CD4-positive, alpha-beta T cell (primary cell): ENCODE measurements at regions of chr4 and their contacts with region 1.

Region 1: GRCh38 chr4:77433418-77433733 is 172.2 kb upstream of the CXCL13 start:
- DNase-seq: peak in 3 of 14 experiments; percentile 51 to 58 (median 55)
- ATAC-seq: peak; percentile 61
- H3K4me3 ChIP-seq: no peak overlapping the region
- H3K4me3 Mint-ChIP-seq: no peak overlapping the region
- H3K27ac ChIP-seq: no peak overlapping the region
- H3K27ac Mint-ChIP-seq: no peak overlapping the region
- H3K4me1 ChIP-seq: peaks cover 2% of the 10 kb centered on the region
- H3K4me1 Mint-ChIP-seq: peaks cover 10% of the 10 kb centered on the region
- H3K27me3 ChIP-seq: no peaks in the 10 kb centered on the region
- H3K27me3 Mint-ChIP-seq: no peaks in the 10 kb centered on the region
- CTCF ChIP-seq: peak; percentile 49

Region 2: DNA sequence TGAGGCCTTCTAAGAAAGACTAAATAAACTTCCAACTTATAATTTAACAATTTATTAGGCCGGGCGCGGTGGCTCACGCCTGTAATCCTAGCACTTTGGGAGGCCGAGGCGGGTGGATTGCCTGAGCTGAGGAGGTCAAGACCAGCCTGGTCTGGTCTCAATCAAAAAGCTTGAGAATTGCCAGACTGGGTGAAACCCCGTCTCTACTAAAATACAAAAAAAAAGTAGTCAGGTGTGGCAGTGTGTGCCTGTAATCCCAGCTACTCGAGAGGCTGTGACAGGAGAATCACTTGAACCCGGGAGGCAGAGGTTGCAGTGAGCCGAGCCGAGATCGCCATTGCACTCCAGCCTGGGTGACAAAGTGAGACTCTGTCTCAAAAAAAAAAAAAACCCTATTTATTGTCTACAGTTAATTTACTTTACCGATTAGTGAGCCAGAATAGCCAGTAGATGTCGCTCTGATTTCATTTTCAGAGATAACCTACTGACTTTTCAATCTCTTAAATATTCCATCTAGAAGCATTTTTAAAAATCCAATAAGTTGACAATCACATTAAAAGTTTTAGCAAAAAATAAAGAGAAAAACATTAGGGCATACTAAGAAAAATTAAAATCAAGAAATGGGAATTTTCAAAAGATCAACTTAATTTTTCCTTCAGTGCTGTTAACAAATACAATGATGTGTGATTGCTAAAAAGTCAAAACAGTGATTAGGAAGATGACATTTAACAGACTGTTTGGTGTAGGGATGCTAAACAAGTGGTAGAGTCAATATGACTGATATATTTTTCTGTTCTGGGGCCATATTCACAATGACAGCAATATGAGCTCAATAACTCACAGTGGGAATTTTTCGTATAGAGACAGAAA is 1002.6 kb before region 1 on chr4:
- CTCF ChIA-PET with region 1: no interaction called
- POLR2A ChIA-PET with region 1: no interaction called
- intact Hi-C with region 1: loop called (anchors 2 to 10 kb)
- DNase-seq: peak in 4 of 14 experiments; percentile 3 to 57 (median 40)
- ATAC-seq: no peak
- H3K4me3 ChIP-seq: no peak overlapping the region
- H3K4me3 Mint-ChIP-seq: no peak overlapping the region
- H3K27ac ChIP-seq: no peak overlapping the region
- H3K27ac Mint-ChIP-seq: no peak overlapping the region
- H3K4me1 ChIP-seq: peaks cover 3% of the 10 kb centered on the region
- H3K4me1 Mint-ChIP-seq: no peaks in the 10 kb centered on the region
- H3K27me3 ChIP-seq: peaks cover 2 to 8% of the 10 kb centered on the region in 2 experiments
- H3K27me3 Mint-ChIP-seq: peaks cover 16% of the 10 kb centered on the region
- CTCF ChIP-seq: peak; percentile 79

Region 3: GRCh38 chr4:77240469-77241066 is 192.8 kb before region 1 on chr4:
- CTCF ChIA-PET with region 1: no interaction called
- POLR2A ChIA-PET with region 1: no interaction called
- intact Hi-C with region 1: loop called (anchors 2 kb)
- DNase-seq: peak; percentile 18 to 59 (median 38)
- ATAC-seq: peak; percentile 59
- H3K4me3 ChIP-seq: no peak overlapping the region
- H3K4me3 Mint-ChIP-seq: no peak overlapping the region
- H3K27ac ChIP-seq: no peak overlapping the region
- H3K27ac Mint-ChIP-seq: no peak overlapping the region
- H3K4me1 ChIP-seq: no peaks in the 10 kb centered on the region
- H3K4me1 Mint-ChIP-seq: no peaks in the 10 kb centered on the region
- H3K27me3 ChIP-seq: no peaks in the 10 kb centered on the region
- H3K27me3 Mint-ChIP-seq: peaks cover 6% of the 10 kb centered on the region
- CTCF ChIP-seq: peak; percentile 76

Region 4: DNA sequence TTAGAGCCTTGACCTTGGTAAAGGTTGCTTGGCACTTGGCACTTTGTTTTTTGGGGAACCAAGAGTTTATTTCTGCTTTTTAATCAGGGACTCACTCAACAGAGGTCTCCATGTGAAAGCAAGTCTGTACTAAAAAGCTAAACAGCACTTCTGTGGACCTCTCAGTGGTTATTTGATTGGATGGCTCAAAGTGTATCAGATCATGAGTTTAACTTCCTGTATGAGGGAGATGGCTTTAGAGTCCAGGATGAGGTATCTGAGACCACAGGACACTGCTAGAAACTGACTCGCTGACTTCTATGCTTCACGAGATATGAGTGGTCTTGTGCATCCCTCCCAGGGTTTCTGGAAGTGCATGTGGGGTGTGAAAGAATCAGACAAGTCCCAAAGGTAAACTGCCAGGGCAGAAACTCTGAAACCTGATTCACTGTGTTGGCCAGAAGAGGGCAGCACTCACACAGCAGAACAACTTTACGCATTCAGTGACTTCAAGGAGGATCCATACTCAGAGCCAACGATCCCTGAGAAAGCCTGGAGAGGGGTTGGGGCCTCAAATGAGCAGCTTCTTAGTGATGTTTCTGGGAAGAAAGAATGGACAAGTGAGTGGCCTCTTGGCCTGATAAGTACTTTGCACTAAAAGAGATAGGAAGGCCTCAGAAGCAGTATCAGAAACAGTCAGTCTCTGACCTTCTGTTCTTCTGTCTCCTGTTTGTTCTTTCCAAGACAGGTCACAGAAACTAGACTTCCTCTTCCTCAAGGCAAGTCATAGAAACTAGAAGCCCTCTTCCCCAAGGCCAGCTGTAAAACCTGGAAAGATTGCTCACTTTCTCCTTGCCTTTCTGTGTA is 48.0 kb before region 1 on chr4:
- CTCF ChIA-PET with region 1: no interaction called
- POLR2A ChIA-PET with region 1: no interaction called
- intact Hi-C with region 1: loop called (anchors 1 to 5 kb)
- DNase-seq: peak; percentile 16 to 64 (median 30)
- ATAC-seq: no peak
- H3K4me3 ChIP-seq: no peak overlapping the region
- H3K4me3 Mint-ChIP-seq: no peak overlapping the region
- H3K27ac ChIP-seq: no peak overlapping the region
- H3K27ac Mint-ChIP-seq: no peak overlapping the region
- H3K4me1 ChIP-seq: no peaks in the 10 kb centered on the region
- H3K4me1 Mint-ChIP-seq: no peaks in the 10 kb centered on the region
- H3K27me3 ChIP-seq: no peaks in the 10 kb centered on the region
- H3K27me3 Mint-ChIP-seq: peaks cover 4% of the 10 kb centered on the region
- CTCF ChIP-seq: peak; percentile 71

Region 5: DNA sequence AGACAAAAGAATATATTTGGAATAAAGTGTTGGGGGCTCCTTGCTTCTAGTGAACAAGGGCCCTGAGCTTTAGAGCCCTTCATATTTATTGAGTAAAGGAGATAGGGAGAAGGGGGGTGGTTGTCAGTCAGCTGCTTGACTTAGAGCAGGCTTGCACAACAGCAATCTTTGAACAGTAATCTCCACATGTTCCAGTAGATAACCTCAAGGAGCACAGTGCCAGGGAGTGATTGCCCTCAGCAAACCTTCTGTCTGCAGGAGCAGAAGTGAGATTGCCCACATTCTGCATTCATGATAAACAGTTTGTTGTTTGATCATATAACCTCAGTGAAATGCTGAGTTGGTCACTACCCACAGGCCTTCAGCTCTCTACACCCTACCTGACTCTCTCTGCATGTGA is 33.5 kb before region 1 on chr4:
- CTCF ChIA-PET with region 1: no interaction called
- POLR2A ChIA-PET with region 1: no interaction called
- intact Hi-C with region 1: no loop called
- DNase-seq: no peak
- ATAC-seq: no peak
- H3K4me3 ChIP-seq: no peak overlapping the region
- H3K4me3 Mint-ChIP-seq: no peak overlapping the region
- H3K27ac ChIP-seq: no peak overlapping the region
- H3K27ac Mint-ChIP-seq: no peak overlapping the region
- H3K4me1 ChIP-seq: no peaks in the 10 kb centered on the region
- H3K4me1 Mint-ChIP-seq: no peaks in the 10 kb centered on the region
- H3K27me3 ChIP-seq: peaks cover 0 to 4% of the 10 kb centered on the region in 2 experiments
- H3K27me3 Mint-ChIP-seq: peaks cover 24% of the 10 kb centered on the region
- CTCF ChIP-seq: no peak

Region 6: GRCh38 chr4:78829296-78829695 is 1395.9 kb after region 1 on chr4:
- CTCF ChIA-PET with region 1: no interaction called
- POLR2A ChIA-PET with region 1: no interaction called
- intact Hi-C with region 1: loop called in 1 of 2 experiments (anchors 10 kb)
- DNase-seq: no peak
- ATAC-seq: no peak
- H3K4me3 ChIP-seq: no peak overlapping the region
- H3K4me3 Mint-ChIP-seq: no peak overlapping the region
- H3K27ac ChIP-seq: no peak overlapping the region
- H3K27ac Mint-ChIP-seq: no peak overlapping the region
- H3K4me1 ChIP-seq: no peaks in the 10 kb centered on the region
- H3K4me1 Mint-ChIP-seq: no peaks in the 10 kb centered on the region
- H3K27me3 ChIP-seq: no peaks in the 10 kb centered on the region
- H3K27me3 Mint-ChIP-seq: no peaks in the 10 kb centered on the region
- CTCF ChIP-seq: no peak

Region 7: DNA sequence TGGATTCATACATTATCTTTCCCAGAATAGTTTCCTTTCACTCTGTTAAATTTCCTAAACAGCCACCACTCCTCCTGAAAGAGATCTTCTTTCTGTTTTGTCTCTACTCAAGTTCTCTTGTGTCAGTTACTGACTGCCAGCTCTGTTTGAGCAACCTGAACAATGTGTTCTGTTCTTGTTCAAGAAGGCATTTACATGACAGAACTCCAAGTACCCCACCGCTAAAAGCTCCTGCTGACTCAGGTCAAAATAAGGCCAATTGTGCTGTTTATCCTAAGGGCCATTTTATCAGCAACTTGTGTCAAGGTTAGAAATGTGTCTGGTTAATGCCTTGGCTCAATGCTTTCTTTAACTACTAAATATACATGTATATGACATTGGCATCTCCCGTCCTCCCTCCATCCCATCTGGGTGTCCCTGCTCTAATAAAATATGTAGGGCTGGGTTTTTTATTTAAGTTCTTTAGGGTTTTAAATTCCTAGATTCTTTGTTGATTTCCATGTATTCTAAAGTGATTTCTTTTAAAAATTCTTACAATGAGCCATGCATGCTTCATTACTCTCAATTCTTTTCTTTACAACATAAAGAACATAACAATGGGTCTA is 1650.1 kb after region 1 on chr4:
- CTCF ChIA-PET with region 1: no interaction called
- POLR2A ChIA-PET with region 1: no interaction called
- intact Hi-C with region 1: no loop called
- DNase-seq: no peak
- ATAC-seq: no peak
- H3K4me3 ChIP-seq: no peak overlapping the region
- H3K4me3 Mint-ChIP-seq: no peak overlapping the region
- H3K27ac ChIP-seq: no peak overlapping the region
- H3K27ac Mint-ChIP-seq: no peak overlapping the region
- H3K4me1 ChIP-seq: no peaks in the 10 kb centered on the region
- H3K4me1 Mint-ChIP-seq: no peaks in the 10 kb centered on the region
- H3K27me3 ChIP-seq: no peaks in the 10 kb centered on the region
- H3K27me3 Mint-ChIP-seq: no peaks in the 10 kb centered on the region
- CTCF ChIP-seq: no peak